ENCODE measurements at regions of chr3 and their contacts with region 1.

Region 1: DNA sequence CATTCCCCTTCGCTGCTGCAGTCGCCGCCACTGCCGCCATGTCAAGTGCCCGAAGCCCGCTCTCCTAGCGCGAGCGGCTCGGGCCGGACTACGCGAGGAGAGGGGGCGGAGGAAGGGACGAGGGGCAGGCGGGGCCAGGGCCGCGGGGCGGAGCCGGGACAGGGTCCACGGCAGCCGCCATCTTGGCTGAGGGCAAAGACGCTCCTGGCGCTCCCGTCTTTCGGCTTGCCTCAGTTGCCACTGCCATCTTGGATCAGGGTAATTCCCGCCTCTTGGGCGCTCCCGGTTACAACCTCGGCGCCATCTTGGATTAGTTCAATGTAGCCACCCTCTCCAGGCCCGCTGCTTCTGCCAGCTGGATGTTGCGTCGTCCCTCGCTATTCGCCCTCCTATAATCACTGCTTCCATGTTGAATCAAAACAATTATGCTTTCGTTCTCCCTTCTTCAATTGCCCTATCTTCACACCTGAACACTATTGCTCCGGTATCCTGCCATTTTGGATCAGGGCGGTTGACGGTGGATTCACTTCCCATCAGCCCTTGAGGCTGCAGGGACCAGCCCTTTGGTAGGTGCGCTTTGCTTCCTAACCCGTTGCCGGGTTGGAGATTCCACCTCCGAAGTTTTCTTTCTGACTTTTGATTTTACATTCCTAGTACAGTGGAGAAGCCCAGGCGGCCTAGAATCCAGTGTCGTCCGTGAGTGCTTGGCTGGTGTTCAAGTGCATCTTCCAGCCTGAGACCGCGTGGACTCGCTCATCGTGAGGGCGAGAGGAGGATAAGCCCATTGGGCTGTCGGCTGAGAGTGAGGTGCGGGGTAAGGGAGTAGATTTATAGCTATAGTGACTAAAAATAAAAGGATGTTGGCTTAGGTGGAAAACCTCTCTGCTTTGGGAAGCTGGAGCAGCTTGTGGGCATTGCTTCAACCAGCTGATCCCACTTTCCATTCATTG is at the start of gene HACD2:
- DNase-seq: peak; percentile 89 to 98
- H3K4me3 ChIP-seq: peak within 1 kb of the TSS; percentile 72
- H3K27ac ChIP-seq: peak within 1 kb of the TSS; percentile 95
- H3K4me1 ChIP-seq: peaks cover 45% of the 10 kb centered on the region
- H3K27me3 ChIP-seq: no peaks in the 10 kb centered on the region
- CTCF ChIP-seq: no peak
- total RNA-seq, gene HACD2: 38.4 and 53.3 TPM in 2 replicates

Region 2: DNA sequence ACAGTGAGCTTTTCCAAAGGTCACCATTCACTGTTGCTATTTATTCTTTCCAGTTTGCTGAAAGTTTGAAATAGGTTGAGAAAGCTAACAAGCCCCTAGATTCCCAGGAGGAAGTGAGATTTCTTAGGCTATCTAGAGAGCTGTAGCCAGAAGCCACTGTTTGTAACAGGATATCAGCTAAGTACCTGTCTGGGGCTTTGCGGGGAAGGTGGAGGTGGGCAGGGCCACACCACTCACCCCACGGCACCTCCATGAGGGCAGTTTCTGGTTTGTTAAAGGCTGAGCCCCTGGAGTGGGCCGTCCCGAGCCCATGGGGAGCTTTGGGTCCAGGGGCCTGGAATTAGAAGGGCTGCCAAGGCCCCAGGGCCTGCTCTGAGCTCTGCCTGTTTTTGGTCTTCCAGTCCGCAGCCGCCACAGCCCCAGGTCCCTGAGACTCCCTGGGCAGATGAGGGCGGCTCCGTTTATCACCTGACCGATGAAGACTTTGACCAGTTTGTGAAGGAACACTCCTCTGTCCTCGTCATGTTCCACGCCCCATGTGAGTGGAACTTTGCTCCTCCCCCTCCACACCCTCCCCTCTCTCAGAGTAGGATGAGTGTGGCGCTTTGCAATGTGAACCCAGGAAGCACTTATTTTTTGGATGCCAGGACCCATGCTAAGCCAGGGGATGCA is 455.0 kb before region 1 on chr3:
- CTCF ChIA-PET with region 1: no interaction called
- POLR2A ChIA-PET with region 1: no interaction called
- intact Hi-C with region 1: no loop called
- DNase-seq: no peak
- H3K4me3 ChIP-seq: no peak overlapping the region
- H3K27ac ChIP-seq: no peak overlapping the region
- H3K4me1 ChIP-seq: no peaks in the 10 kb centered on the region
- H3K27me3 ChIP-seq: no peaks in the 10 kb centered on the region
- CTCF ChIP-seq: no peak

Region 3: DNA sequence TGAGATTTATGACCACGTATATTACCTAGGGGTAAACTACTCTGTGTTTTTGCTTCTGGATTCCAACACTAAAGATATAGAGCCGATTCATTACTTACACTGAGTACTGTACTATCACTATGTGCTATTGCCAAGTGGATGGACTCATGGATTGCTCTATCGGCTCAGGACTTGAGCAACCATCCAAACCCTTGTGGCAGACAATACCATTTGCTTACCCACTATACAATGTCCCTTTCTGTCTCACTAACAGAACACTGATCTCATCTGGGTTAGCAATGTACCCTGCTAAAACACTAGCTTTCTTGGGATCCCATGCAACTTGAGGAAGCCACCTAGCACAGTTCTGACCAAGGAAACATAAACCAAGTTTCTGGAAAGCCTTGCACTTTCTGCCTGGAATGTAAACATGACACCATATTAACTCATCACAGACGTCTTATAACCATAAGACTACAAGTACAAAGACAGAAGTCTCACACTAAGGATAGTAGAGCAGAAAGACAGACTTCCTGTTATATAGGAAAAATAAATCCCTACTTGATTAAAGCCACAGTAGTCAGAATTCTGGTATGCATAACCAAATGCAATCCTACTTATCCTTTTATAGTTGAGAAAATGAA is 39.0 kb before region 1 on chr3:
- CTCF ChIA-PET with region 1: no interaction called
- POLR2A ChIA-PET with region 1: interaction called, 23 read pairs
- intact Hi-C with region 1: no loop called
- DNase-seq: no peak
- H3K4me3 ChIP-seq: no peak overlapping the region
- H3K27ac ChIP-seq: no peak overlapping the region
- H3K4me1 ChIP-seq: no peaks in the 10 kb centered on the region
- H3K27me3 ChIP-seq: no peaks in the 10 kb centered on the region
- CTCF ChIP-seq: no peak

Region 4: GRCh38 chr3:123618768-123619484 is 33.7 kb after region 1 on chr3:
- CTCF ChIA-PET with region 1: no interaction called
- POLR2A ChIA-PET with region 1: interaction called, 9 read pairs
- intact Hi-C with region 1: loop called (anchors 5 kb)
- DNase-seq: peak; percentile 58 to 66
- H3K4me3 ChIP-seq: no peak overlapping the region
- H3K27ac ChIP-seq: peak overlapping the region; percentile 89
- H3K4me1 ChIP-seq: peaks cover 53% of the 10 kb centered on the region
- H3K27me3 ChIP-seq: no peaks in the 10 kb centered on the region
- CTCF ChIP-seq: no peak

Region 5: GRCh38 chr3:124260206-124260915 is 675.1 kb after region 1 on chr3:
- CTCF ChIA-PET with region 1: no interaction called
- POLR2A ChIA-PET with region 1: no interaction called
- intact Hi-C with region 1: loop called (anchors 10 kb)
- DNase-seq: peak in 1 of 2 experiments; percentile 37
- H3K4me3 ChIP-seq: no peak overlapping the region
- H3K27ac ChIP-seq: no peak overlapping the region
- H3K4me1 ChIP-seq: no peaks in the 10 kb centered on the region; the same call in 1 of the 2 replicates
- H3K27me3 ChIP-seq: 0 out of 2 replicates have a peak, but pooled peaks cover 3% of the 10 kb centered on the region
- CTCF ChIP-seq: no peak